HepG2 (cell line): ENCODE measurements at regions of chr7 and their contacts with region 1.

Region 1: DNA sequence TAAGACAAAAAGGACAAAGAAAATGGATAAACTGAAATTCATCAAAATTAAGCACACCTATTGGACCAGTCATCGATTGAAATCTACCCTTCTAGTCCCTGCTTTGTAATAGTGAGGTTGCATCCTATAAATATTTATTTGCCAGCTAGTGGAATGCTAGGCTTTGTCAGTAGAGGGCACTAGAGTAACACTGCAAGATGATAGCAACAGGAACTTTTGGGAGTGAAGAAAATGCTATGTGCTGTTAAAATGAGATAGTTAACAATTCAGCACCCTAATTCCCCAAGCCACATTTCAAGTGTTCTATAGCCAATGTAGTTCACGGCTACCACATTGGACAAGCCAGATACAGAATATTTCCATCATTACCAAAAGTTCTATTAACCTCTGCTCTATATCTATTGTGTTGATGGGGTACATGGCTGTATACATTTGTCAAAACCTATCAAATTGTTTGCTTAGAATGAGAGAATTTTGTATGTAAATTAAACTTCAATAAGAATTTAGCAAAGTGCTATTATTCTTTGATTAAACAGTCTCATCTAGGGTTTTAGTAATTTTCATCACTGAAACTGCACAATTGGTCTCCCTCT is 69.8 kb downstream of the LSMEM1 start:
- DNase-seq: peak; percentile 60
- ATAC-seq: peak; percentile 83
- H3K4me3 ChIP-seq: no peak overlapping the region
- H3K27ac ChIP-seq: no peak overlapping the region
- H3K4me1 ChIP-seq: no peaks in the 10 kb centered on the region
- H3K27me3 ChIP-seq: no peaks in the 10 kb centered on the region; a peak in 1 of 5 replicates
- CTCF ChIP-seq: peak; percentile 88
- EP300 ChIP-seq: no peak
- POLR2A ChIP-seq: no peak
- RAD21 ChIP-seq: peak; percentile 74

Region 2: DNA sequence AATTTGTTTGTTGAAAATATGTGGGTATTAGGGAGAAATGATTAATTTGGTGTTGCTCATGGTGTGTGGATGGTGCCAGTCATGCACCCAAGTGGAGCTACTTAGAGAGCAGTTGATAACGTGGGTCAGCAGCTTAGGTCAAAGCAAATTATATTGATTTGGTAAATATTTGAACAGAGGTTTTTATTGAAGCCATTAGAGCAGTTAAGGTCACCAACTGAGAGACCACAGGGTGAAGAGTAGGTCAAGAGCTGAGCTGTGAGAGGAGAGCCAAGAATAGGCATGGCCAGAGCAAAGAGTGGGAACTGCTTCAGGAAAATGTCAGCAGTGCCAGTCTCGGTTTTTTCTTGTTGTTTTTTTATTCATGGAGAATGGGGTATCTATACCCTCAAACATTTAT is 141.8 kb after region 1 on chr7:
- CTCF ChIA-PET with region 1: no interaction called
- POLR2A ChIA-PET with region 1: no interaction called
- in situ Hi-C with region 1: no loop called
- intact Hi-C with region 1: loop called (anchors 5 kb)
- DNase-seq: no peak
- ATAC-seq: peak; percentile 73
- H3K4me3 ChIP-seq: no peak overlapping the region
- H3K27ac ChIP-seq: no peak overlapping the region
- H3K4me1 ChIP-seq: no peaks in the 10 kb centered on the region
- H3K27me3 ChIP-seq: peaks cover 0 to 3% of the 10 kb centered on the region in 2 experiments; a peak in 1 of 5 replicates
- CTCF ChIP-seq: no peak
- EP300 ChIP-seq: no peak
- POLR2A ChIP-seq: no peak
- RAD21 ChIP-seq: no peak

Region 3: DNA sequence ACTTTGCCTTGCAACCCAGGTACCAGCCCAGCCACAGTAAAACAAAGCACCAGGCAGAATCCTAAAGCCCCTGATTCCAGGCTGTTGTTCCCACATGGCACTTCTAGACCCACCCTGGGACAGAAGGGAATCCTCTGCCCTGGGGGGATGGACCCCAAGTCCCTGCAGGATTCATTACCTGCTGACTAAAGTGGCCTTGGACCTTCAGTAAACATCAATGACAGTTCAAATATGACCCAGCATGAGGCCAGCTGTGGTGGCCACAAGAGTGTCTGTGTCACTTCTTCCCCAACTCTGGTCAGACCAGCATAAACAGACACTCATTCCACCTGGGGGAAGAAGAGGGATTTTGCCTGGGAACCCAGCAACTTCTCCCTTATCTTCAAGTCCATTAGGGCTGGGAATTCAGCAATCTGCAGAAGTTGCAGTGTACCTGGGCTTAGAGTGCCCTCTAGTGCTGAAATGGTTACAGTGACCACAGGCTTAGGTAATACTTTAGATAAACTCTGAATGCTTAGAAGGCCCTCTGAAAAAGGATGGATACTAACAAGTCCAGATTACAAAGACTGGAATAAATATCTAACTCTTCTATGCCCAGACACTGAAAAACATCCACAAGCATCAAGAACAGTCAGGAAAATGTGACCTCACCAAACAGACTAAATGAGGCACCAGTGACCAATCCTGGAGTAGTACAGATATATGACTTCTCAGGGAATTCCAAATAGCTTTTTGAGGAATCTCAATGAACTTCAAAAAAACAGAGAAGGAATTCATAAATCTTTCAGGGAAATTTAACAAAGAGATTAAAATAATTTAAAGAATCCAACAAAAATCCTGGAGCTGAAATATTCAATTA is 348.1 kb after region 1 on chr7:
- CTCF ChIA-PET with region 1: interaction called, 23 read pairs
- POLR2A ChIA-PET with region 1: no interaction called
- in situ Hi-C with region 1: no loop called
- intact Hi-C with region 1: loop called (anchors 1 kb)
- DNase-seq: peak; percentile 79
- ATAC-seq: peak; percentile 92
- H3K4me3 ChIP-seq: peak overlapping the region in 1 of 3 experiments; percentile 35; a peak in 1 of 6 replicates
- H3K27ac ChIP-seq: peak overlapping the region; percentile 80
- H3K4me1 ChIP-seq: peaks cover 39% of the 10 kb centered on the region
- H3K27me3 ChIP-seq: no peaks in the 10 kb centered on the region
- CTCF ChIP-seq: peak; percentile 82
- EP300 ChIP-seq: 0 out of 4 replicates have a peak, but pooled peaks of 1 of the 2 experiments have one; percentile 21
- POLR2A ChIP-seq: no peak
- RAD21 ChIP-seq: peak; percentile 80

Region 4: GRCh38 chr7:113421696-113422330 is 871.2 kb after region 1 on chr7:
- CTCF ChIA-PET with region 1: interaction called, 26 read pairs
- POLR2A ChIA-PET with region 1: no interaction called
- in situ Hi-C with region 1: loop called (anchors 25 kb)
- intact Hi-C with region 1: loop called (anchors 1 kb)
- DNase-seq: peak; percentile 81
- ATAC-seq: peak; percentile 100
- H3K4me3 ChIP-seq: no peak overlapping the region
- H3K27ac ChIP-seq: no peak overlapping the region
- H3K4me1 ChIP-seq: no peaks in the 10 kb centered on the region
- H3K27me3 ChIP-seq: no peaks in the 10 kb centered on the region
- CTCF ChIP-seq: peak; percentile 89
- EP300 ChIP-seq: no peak
- POLR2A ChIP-seq: no peak
- RAD21 ChIP-seq: peak; percentile 62

Region 5: DNA sequence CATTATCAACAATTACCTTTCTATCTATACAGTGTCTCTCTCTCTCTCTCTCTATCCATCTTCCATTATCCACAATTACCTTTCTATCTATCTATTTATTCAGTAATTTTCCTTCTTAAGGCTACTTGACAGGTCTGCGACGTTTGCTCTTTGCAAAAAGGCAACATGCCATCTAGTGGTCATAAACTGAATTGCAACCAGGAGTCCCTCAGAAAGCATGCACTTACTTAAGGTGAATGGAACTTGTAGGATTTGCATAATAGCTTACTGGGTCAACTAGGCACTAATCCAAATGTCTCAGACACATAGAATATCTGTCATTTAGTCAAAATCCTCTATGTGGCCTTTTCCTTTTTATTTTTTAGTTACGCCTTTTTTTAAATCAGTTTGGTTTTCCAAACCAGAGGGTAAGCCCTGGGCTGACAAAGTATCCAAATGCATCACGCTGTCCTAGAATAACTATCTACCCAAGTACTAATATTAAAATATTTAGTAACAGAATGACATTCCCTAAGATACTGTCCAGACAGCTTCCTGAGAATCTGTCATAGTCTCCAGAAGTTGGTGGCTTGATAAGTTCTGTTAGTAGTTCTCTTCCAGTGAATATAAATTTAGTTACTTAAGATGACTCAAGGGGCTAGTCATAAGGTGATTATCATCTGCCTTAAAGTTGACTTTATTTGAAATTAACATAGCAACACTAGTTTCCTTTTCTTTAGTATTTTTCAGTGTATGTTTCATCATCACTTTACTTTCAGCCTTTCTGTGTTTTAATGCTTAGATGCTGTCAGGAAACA is 1159.9 kb after region 1 on chr7:
- CTCF ChIA-PET with region 1: no interaction called
- POLR2A ChIA-PET with region 1: no interaction called
- in situ Hi-C with region 1: loop called (anchors 25 kb)
- intact Hi-C with region 1: no loop called
- DNase-seq: peak; percentile 63
- ATAC-seq: peak; percentile 86
- H3K4me3 ChIP-seq: no peak overlapping the region
- H3K27ac ChIP-seq: no peak overlapping the region
- H3K4me1 ChIP-seq: no peaks in the 10 kb centered on the region
- H3K27me3 ChIP-seq: no peaks in the 10 kb centered on the region
- CTCF ChIP-seq: peak; percentile 73
- EP300 ChIP-seq: no peak
- POLR2A ChIP-seq: no peak
- RAD21 ChIP-seq: no peak